ENCODE measurements at regions of chr12 and their contacts with region 1.

Region 1: DNA sequence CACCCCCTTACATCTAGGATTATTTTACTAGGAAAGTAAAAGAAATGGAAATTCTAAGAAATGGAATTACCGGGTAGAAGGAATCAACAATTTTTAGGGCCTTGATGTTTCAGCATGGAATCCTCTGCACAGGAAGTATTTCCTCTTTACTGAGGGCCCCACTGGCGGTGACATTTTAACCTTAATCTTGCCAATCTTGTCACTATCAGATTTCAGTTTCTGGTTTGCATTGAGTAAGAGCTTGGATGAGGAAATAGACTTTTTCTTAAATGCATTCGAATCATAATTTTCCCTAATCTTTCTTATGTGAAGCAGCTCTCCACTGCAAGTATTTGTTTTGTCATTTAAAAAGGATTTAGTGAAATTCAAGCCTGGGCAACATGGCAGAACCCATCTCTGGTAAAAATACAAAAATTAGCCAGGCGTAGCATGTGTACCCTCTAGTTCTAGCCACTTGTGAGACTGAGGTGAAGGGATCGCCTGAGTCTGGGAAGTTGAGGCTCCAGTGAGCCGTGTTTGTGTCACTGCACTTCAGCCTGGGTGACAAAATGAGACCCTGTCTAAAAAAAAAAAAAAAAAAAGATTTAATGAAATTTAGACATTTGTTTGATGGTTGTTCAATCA is 40.7 kb downstream of the TPCN1 start:
- DNase-seq: peak; percentile 63
- ATAC-seq: peak; percentile 84
- H3K4me3 Mint-ChIP-seq: no peak overlapping the region
- H3K27ac Mint-ChIP-seq: peak overlapping the region; percentile 79
- H3K4me1 Mint-ChIP-seq: peaks cover 38% of the 10 kb centered on the region
- H3K27me3 Mint-ChIP-seq: no peaks in the 10 kb centered on the region

Region 2: GRCh38 chr12:113208041-113208934 is 53.7 kb before region 1 on chr12:
- CTCF ChIA-PET with region 1: no interaction called
- POLR2A ChIA-PET with region 1: no interaction called
- intact Hi-C with region 1: loop called in 1 of 2 experiments (anchors 5 kb)
- DNase-seq: peak; percentile 85
- ATAC-seq: peak; percentile 86
- H3K4me3 Mint-ChIP-seq: peak overlapping the region; percentile 45
- H3K27ac Mint-ChIP-seq: peak overlapping the region; percentile 95
- H3K4me1 Mint-ChIP-seq: peaks cover 54% of the 10 kb centered on the region
- H3K27me3 Mint-ChIP-seq: no peaks in the 10 kb centered on the region

Region 3: DNA sequence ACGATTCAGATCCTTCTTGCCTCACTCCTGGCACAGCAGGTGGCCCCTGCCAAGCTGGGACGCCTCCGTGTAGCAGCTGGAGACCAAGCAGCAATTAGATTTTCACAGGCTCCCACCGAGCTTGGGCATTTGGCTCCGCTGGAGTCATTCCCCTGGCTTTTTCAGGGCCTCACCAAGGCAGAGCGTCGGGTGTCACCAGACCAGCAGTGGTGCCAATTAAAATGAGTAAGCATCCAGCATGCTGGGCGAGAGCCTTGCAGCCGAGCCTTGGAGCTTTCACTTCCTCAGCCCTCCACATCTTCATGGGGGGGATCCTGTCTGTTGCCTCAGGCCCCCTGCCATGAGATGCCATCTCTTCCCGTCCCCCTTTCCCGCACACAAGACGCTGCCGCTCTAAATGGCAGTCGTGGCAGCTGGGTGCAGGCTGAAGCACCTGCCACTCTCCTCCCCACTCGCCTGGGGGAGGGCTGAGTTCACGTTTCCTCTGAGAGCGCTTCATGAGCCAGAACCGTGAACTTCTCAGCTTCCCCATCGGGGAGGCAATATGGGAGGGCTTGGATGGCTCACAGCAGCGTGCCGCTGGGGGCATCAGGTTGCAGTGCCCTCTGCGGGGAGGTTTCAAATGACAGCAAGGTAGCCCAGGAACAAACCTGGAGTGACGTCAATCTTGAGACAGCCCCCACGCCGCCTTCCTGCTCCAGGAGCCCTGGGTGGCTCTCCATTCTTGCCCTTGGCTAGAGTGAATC is 28.9 kb before region 1 on chr12:
- CTCF ChIA-PET with region 1: no interaction called
- POLR2A ChIA-PET with region 1: interaction called, 3 read pairs
- intact Hi-C with region 1: loop called in 1 of 2 experiments (anchors 2 kb)
- DNase-seq: peak; percentile 80
- ATAC-seq: peak; percentile 77
- H3K4me3 Mint-ChIP-seq: peak overlapping the region; percentile 64
- H3K27ac Mint-ChIP-seq: peak overlapping the region; percentile 93
- H3K4me1 Mint-ChIP-seq: peaks cover 60% of the 10 kb centered on the region
- H3K27me3 Mint-ChIP-seq: no peaks in the 10 kb centered on the region